ENCODE measurements at regions of chr7 and their contacts with region 1.

Region 1: DNA sequence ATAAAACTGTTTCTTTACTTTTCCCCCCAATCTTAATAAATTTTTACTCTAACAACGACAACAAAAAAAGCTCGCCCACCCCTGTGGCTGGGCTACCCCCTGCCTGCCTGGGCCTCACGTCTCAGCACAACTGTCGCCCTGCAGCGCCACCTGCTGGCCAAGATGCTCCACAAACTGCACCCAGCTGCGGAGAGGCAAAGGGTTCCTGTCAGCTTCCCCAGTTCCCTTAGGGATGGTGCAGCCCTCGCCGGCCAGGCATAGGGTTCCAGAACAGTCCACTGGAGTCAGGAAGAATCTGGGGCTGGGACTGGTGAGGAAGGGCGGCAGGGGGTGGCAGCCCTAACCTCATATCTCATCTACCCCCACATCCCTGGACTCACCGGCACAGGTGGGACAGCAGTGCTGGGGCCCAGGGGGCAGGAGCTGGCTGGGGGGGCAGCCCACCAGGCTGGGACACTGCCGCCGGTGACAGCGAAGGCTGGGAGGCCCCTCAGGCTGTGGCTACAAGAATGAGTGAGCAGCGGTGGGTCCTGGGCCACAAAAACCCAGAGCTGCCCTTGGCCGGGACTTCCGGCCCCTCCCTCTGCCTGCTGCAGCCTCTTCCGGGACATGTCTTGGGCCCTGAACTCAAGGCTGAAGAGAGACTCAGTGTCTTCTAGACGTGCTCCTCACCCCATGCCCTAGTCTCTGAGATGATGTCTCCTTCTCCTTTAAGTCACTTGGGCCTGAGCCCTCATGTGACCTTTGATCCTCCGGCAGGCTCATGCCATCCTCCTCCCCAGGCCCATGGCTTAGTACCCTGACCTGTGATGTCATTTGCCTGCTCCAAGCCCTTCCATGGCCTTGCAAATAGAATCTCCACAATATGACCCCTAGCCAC is 21.2 kb downstream of the ATP6V1F start:
- DNase-seq: peak; percentile 92
- ATAC-seq: peak; percentile 82
- H3K4me3 Mint-ChIP-seq: peak overlapping the region; percentile 39
- H3K27ac Mint-ChIP-seq: peak overlapping the region; percentile 32
- H3K4me1 Mint-ChIP-seq: peaks cover 2% of the 10 kb centered on the region
- H3K27me3 Mint-ChIP-seq: peaks cover 4% of the 10 kb centered on the region
- CTCF ChIP-seq: peak; percentile 95

Region 2: DNA sequence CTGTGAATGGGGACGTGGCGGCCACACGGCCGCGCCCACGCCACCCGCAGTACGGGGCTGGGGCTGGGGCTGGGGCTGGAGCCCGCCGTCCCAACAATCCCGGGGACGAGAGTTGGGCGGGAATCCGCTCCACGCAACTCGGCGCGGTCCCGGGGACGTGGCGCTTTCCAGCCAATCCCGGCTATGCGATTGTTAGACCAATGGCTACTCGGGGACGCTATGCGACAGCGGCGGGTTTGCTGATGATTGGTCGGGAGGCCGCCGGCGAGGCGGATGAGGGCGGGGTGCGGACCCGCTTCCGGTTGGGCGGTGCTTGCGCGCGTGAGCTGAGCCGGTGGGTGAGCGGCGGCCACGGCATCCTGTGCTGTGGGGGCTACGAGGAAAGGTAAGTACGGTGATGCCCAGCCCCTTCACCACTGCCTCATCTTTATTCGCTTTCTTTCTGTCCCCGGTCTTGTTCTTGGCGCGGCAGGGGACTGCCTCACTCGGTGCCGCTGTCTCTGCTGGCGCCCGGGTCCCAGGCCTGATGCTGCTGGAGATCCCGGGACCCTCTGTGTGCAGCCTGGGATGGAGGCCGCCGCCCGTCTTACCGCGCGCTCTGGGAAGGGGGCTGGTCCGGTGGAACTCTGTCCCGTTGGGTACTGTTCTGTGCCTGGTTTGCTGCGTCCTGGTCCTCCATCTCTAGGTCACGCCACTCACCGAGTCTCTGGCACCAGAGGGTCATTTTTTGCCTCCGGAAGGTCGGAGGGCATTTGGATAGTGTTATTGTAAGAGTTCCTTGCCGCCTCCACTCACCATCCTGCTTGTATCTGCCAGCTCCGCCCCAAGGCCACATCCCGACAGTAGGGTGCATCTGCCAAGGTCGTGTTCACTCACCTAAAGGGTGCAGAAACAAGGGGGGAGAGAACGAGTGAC is 144.6 kb before region 1 on chr7 and contains the start of gene CALU:
- CTCF ChIA-PET with region 1: interaction called, 17 read pairs
- POLR2A ChIA-PET with region 1: no interaction called
- intact Hi-C with region 1: no loop called
- DNase-seq: peak; percentile 97
- ATAC-seq: peak; percentile 98
- H3K4me3 Mint-ChIP-seq: peak within 1 kb of the TSS; percentile 99
- H3K27ac Mint-ChIP-seq: peak within 1 kb of the TSS; percentile 90
- H3K4me1 Mint-ChIP-seq: peaks cover 42% of the 10 kb centered on the region
- H3K27me3 Mint-ChIP-seq: no peaks in the 10 kb centered on the region
- CTCF ChIP-seq: no peak
- total RNA-seq, gene CALU: 30.9 to 33.1 TPM

Region 3: DNA sequence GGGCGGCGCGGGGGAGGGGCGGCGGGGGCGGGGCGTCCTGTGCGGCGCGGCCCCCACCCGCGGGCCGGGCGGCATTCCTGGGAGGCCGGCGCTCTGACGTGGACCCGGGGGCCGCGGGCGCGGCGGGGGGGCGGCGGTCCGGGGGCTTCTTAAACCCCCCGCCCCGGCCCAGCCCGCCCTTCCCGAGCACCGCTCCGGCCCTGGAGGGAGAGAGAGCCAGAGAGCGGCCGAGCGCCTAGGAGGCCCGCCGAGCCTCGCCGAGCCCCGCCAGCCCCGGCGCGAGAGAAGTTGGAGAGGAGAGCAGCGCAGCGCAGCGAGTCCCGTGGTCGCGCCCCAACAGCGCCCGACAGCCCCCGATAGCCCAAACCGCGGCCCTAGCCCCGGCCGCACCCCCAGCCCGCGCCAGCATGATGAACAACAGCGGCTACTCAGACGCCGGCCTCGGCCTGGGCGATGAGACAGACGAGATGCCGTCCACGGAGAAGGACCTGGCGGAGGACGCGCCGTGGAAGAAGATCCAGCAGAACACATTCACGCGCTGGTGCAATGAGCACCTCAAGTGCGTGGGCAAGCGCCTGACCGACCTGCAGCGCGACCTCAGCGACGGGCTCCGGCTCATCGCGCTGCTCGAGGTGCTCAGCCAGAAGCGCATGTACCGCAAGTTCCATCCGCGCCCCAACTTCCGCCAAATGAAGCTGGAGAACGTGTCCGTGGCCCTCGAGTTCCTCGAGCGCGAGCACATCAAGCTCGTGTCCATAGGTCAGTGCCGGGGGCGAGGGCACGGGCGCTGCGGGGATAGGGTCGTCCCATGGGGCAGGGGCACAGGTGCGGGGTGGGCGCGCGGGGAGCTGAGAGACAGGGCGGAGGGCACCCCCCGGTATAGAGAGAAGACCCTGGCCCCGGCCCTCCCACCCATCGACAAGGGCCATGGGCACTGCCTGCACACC is 53.4 kb before region 1 on chr7 and contains the start of gene FLNC:
- CTCF ChIA-PET with region 1: interaction called, 13 read pairs
- POLR2A ChIA-PET with region 1: no interaction called
- intact Hi-C with region 1: no loop called
- DNase-seq: peak; percentile 59
- ATAC-seq: peak; percentile 59
- H3K4me3 Mint-ChIP-seq: peak within 1 kb of the TSS; percentile 50
- H3K27ac Mint-ChIP-seq: no peak within 1 kb of the TSS
- H3K4me1 Mint-ChIP-seq: peaks cover 15% of the 10 kb centered on the region
- H3K27me3 Mint-ChIP-seq: peaks cover 38% of the 10 kb centered on the region
- CTCF ChIP-seq: no peak
- total RNA-seq, gene FLNC: 0.14 to 0.16 TPM

Region 4: GRCh38 chr7:128862571-128863432 is 21.1 kb before region 1 on chr7 and contains the start of gene ATP6V1F:
- CTCF ChIA-PET with region 1: interaction called, 100 read pairs
- POLR2A ChIA-PET with region 1: interaction called, 5 read pairs
- intact Hi-C with region 1: no loop called
- DNase-seq: peak; percentile 99
- ATAC-seq: peak; percentile 93
- H3K4me3 Mint-ChIP-seq: peak within 1 kb of the TSS; percentile 85
- H3K27ac Mint-ChIP-seq: peak within 1 kb of the TSS; percentile 87
- H3K4me1 Mint-ChIP-seq: peaks cover 21% of the 10 kb centered on the region
- H3K27me3 Mint-ChIP-seq: peaks cover under 1% of the 10 kb centered on the region
- CTCF ChIP-seq: no peak
- total RNA-seq, gene ATP6V1F: 109 to 113 TPM

Region 5: GRCh38 chr7:128899392-128899791 is 15.5 kb after region 1 on chr7:
- CTCF ChIA-PET with region 1: interaction called, 21 read pairs
- POLR2A ChIA-PET with region 1: no interaction called
- intact Hi-C with region 1: no loop called
- DNase-seq: no peak
- ATAC-seq: no peak
- H3K4me3 Mint-ChIP-seq: no peak overlapping the region
- H3K27ac Mint-ChIP-seq: no peak overlapping the region
- H3K4me1 Mint-ChIP-seq: no peaks in the 10 kb centered on the region
- H3K27me3 Mint-ChIP-seq: peaks cover 1% of the 10 kb centered on the region
- CTCF ChIP-seq: no peak